Naive thymus-derived CD4-positive, alpha-beta T cell (primary cell): ENCODE measurements at regions of chr14 and their contacts with region 1.

Region 1: DNA sequence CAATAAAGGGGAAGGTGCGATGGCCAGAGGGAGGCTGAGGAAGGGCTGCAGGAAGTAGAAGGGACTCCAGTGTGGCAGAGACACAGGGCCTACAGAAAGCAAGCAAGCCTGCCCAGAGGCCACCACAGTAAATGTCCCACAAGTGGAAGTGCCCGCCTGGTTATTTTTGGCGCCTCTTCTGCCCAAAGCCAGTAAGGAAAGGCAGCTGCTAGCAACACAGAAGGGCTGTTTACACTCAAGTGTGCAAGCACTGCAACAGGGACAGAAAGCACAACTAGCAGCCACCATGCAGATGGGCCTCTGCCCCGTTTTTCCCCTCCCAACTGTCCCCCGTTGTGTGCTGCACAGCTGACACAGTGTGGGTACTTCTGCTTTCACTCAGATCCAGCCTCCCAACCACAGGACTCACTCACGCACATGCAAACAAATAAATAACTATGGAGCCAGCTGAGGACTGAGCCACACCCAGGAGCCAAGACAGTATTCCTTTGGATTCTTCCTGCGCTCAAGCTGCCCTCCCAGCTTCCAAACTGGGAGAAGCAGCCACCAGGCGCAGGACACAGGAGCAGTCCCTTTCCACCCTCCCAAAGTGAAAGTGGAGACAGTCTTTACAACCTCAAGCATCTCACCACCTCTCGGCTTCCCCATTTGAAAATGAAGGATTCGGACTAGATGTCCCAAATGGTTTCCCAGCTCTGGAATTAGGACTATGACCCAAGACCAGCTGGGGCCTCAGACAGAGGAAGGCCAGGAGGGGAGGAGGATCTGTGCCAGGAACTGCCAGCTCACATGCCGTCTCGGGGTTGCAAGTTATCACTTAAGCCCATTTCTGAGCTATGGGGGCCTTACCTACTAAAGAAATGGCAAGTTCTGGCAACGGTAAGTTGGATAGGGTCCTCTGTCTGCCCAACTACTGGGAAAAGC is 40.0 kb upstream of the PNMA1 start:
- DNase-seq: peak in 2 of 9 donors; percentile 29 to 45
- ATAC-seq: peak; percentile 53
- H3K4me3 ChIP-seq: peak overlapping the region; percentile 59
- H3K4me3 Mint-ChIP-seq: peak overlapping the region; percentile 83 to 97 (median 90)
- H3K27ac ChIP-seq: peak overlapping the region; percentile 86
- H3K27ac Mint-ChIP-seq: peak overlapping the region; percentile 84 to 99 (median 99)
- H3K4me1 ChIP-seq: peaks cover 85 to 86% of the 10 kb centered on the region in 2 donors
- H3K4me1 Mint-ChIP-seq: peaks cover 79 to 95% (median 93%) of the 10 kb centered on the region in 7 donors
- H3K27me3 ChIP-seq: no peaks in the 10 kb centered on the region
- H3K27me3 Mint-ChIP-seq: no peaks in the 10 kb centered on the region

Region 2: DNA sequence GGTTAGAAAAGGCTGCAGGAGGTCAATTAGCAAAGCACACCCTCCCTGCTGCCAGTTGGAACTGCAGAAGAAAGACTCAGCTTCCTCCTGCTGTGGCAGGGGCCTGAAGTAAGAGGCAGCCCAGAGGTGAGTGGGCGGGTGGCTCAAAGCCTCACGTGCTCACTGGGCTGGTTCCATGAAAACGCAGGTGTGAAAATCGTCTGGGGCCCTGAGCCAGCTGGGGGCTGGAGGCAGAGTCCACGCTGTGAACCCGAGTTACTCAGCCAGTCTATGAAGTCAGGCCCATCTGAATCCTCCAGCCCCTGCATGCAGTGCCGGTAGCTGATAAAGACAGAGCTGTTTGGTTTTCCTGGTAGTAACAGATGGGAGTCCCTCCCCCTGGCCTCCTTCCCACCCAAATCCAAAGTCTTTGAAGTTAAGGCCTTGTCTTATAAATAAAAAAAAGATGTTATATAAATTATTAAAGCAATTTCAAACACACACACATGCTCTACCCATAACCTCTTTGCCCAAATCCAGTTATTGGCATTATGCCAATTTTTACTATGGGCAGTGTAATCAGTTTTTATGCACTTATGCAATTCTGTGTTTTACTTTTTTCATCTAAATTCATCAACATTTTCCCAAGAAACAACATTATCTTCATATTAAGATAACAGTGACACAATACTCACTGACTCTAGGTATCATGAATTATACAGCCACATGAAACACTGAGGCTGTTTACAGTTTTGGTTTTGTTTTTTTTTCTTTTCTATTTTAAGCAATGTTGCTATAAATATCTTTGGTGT is 17.8 kb after region 1 on chr14:
- CTCF ChIA-PET with region 1: interaction called, 8 read pairs
- POLR2A ChIA-PET with region 1: interaction called, 81 read pairs
- intact Hi-C with region 1: loop called in 1 of 2 experiments (anchors 2 kb)
- DNase-seq: peak in 8 of 9 donors; percentile 57 to 73 (median 65)
- ATAC-seq: peak; percentile 82
- H3K4me3 ChIP-seq: peak overlapping the region; percentile 24
- H3K4me3 Mint-ChIP-seq: peak overlapping the region; percentile 63 to 81 (median 74)
- H3K27ac ChIP-seq: peak overlapping the region; percentile 69
- H3K27ac Mint-ChIP-seq: peak overlapping the region; percentile 80 to 94 (median 92)
- H3K4me1 ChIP-seq: peaks cover 56 to 65% of the 10 kb centered on the region in 2 donors
- H3K4me1 Mint-ChIP-seq: peaks cover 57 to 79% (median 69%) of the 10 kb centered on the region in 7 donors
- H3K27me3 ChIP-seq: no peaks in the 10 kb centered on the region
- H3K27me3 Mint-ChIP-seq: no peaks in the 10 kb centered on the region